ENCODE measurements at regions of chr22 and their contacts with region 1.

Region 1: DNA sequence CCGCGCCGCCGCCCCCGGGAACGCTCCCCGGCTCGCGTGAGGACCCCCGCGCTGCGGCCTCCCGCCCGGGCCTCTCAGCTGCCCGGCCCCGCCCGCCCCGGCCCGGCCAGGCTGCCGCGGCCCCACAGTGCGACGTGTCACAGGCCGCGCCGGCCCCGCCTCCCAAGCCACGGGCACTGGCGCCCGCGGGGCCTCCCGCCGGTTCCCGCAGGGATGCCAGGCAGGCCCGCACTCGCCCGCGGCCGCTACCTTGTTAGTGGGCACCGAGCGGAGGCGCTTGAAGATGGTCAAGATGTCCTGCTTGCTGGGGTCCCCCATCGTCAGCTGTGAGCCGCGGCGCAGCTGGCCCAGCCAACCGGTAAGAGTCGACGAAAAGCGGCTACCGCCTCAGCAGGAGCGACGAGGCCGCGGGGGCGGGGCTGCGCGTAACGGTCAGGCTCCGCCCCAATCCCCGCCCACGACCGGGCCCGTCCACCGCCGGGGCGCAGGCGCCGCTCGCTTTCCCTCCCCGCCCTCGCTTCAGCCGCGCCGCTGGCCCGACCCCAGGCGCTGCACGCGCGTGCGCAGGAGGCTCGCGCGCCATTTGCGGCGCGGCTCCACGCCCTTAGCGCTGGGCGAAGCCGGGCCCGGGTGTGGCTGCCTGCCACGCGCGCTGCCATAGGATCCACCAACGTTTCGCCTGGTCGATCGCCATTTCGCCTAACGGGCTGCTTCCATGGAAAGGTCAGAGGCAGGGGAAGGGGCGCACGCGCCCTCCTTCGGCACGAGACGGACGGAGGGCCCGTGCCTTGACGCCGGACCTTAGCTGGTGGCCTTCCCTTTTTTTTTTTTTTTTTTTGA is at the start of gene ARFGAP3:
- DNase-seq: peak; percentile 100
- CTCF ChIP-seq: no peak

Region 2: DNA sequence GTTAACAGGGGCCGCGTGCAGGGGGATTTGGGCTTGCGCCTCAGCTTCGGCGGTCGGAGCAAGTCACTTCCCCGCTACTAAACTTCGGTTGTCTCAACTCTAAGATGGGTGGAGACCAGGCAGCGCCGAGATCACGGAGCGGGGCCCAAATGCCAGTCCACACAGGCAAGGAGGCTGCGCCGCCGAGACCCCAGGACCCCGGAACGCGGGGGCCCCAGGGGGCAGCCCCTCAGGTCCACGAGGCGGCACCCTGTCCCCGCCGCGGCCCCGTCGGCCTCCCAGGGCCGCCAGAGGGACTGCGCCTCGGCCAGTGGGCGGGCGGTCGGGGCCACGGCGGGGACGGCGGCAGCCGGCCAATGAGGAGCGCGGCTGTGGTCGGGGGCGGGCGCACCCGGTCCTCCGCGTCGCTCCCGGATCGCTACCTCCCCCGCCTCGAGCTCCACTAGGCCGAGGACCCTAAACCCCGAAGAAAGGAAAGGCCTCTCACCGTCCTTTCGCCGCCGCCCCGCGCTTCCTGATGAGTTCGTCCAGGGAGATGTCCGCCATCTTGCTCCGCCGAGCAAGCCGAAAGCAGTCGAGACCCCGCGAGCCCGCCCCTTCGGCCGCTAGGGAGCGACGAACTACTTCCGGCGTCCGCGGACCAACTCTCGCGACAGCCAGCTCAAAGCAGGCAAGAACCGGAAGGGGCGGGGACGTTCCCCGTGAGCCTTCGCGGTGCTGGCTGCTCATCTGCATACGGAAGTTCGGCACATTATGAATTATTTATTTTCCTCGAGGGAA is 242.6 kb before region 1 on chr22 and contains the start of gene POLDIP3:
- CTCF ChIA-PET with region 1: no interaction called
- POLR2A ChIA-PET with region 1: interaction called, 10 read pairs
- DNase-seq: peak; percentile 98
- CTCF ChIP-seq: peak; percentile 31

Measured in GM10248 (cell line).